CD8-positive, alpha-beta T cell (primary cell): ENCODE measurements at regions of chr3 and their contacts with region 1.

Region 1: GRCh38 chr3:121834696-121835464 is at the starts of genes EAF2 and IQCB1:
- DNase-seq: peak; percentile 91 to 98 (median 95)
- ATAC-seq: peak; percentile 97
- H3K4me3 ChIP-seq: peak within 1 kb of the TSS; percentile 74 to 91
- H3K4me3 Mint-ChIP-seq: peak within 1 kb of the TSS; percentile 93
- H3K27ac ChIP-seq: peak within 1 kb of the TSS; percentile 82 to 87
- H3K27ac Mint-ChIP-seq: peak within 1 kb of the TSS; percentile 94
- H3K4me1 ChIP-seq: peaks cover 25% of the 10 kb centered on the region
- H3K4me1 Mint-ChIP-seq: peaks cover 53% of the 10 kb centered on the region
- H3K27me3 ChIP-seq: no peaks in the 10 kb centered on the region
- H3K27me3 Mint-ChIP-seq: no peaks in the 10 kb centered on the region
- CTCF ChIP-seq: no peak
- total RNA-seq, gene EAF2: 3.5 to 3.7 TPM
- total RNA-seq, gene IQCB1: 36.5 to 42.2 TPM

Region 2: GRCh38 chr3:120596116-120596852 is 1238.6 kb before region 1 on chr3 and contains the start of gene NDUFB4:
- CTCF ChIA-PET with region 1: no interaction called
- POLR2A ChIA-PET with region 1: no interaction called
- intact Hi-C with region 1: loop called in 1 of 2 experiments (anchors 10 kb)
- DNase-seq: peak; percentile 87 to 99 (median 95)
- ATAC-seq: peak; percentile 92
- H3K4me3 ChIP-seq: peak within 1 kb of the TSS; percentile 77 to 92
- H3K4me3 Mint-ChIP-seq: peak within 1 kb of the TSS; percentile 94
- H3K27ac ChIP-seq: peak within 1 kb of the TSS; percentile 91 to 95
- H3K27ac Mint-ChIP-seq: peak within 1 kb of the TSS; percentile 97
- H3K4me1 ChIP-seq: peaks cover 34% of the 10 kb centered on the region
- H3K4me1 Mint-ChIP-seq: peaks cover 12% of the 10 kb centered on the region
- H3K27me3 ChIP-seq: no peaks in the 10 kb centered on the region
- H3K27me3 Mint-ChIP-seq: no peaks in the 10 kb centered on the region
- CTCF ChIP-seq: no peak
- total RNA-seq, gene NDUFB4: 63.2 to 71.5 TPM

Region 3: GRCh38 chr3:121584418-121584817 is 250.5 kb before region 1 on chr3:
- CTCF ChIA-PET with region 1: no interaction called
- POLR2A ChIA-PET with region 1: no interaction called
- intact Hi-C with region 1: no loop called
- DNase-seq: no peak
- ATAC-seq: no peak
- H3K4me3 ChIP-seq: no peak overlapping the region
- H3K4me3 Mint-ChIP-seq: no peak overlapping the region
- H3K27ac ChIP-seq: no peak overlapping the region
- H3K27ac Mint-ChIP-seq: no peak overlapping the region
- H3K4me1 ChIP-seq: no peaks in the 10 kb centered on the region
- H3K4me1 Mint-ChIP-seq: no peaks in the 10 kb centered on the region
- H3K27me3 ChIP-seq: no peaks in the 10 kb centered on the region
- H3K27me3 Mint-ChIP-seq: peaks cover 16% of the 10 kb centered on the region
- CTCF ChIP-seq: no peak

Region 4: GRCh38 chr3:121660356-121661171 is 174.3 kb before region 1 on chr3 and contains the start of gene HCLS1:
- CTCF ChIA-PET with region 1: no interaction called
- POLR2A ChIA-PET with region 1: interaction called, 6 read pairs
- intact Hi-C with region 1: loop called (anchors 1 to 2 kb)
- DNase-seq: peak; percentile 52 to 90 (median 71)
- ATAC-seq: peak; percentile 83
- H3K4me3 ChIP-seq: peak within 1 kb of the TSS; percentile 58
- H3K4me3 Mint-ChIP-seq: peak within 1 kb of the TSS; percentile 92
- H3K27ac ChIP-seq: peak within 1 kb of the TSS; percentile 86 to 95
- H3K27ac Mint-ChIP-seq: peak within 1 kb of the TSS; percentile 99
- H3K4me1 ChIP-seq: peaks cover 43% of the 10 kb centered on the region
- H3K4me1 Mint-ChIP-seq: peaks cover 54% of the 10 kb centered on the region
- H3K27me3 ChIP-seq: no peaks in the 10 kb centered on the region
- H3K27me3 Mint-ChIP-seq: no peaks in the 10 kb centered on the region
- CTCF ChIP-seq: no peak
- total RNA-seq, gene HCLS1: 162 to 179 TPM

Region 5: GRCh38 chr3:121749276-121750086 is 85.4 kb before region 1 on chr3 and contains the start of gene GOLGB1:
- CTCF ChIA-PET with region 1: no interaction called
- POLR2A ChIA-PET with region 1: no interaction called
- intact Hi-C with region 1: loop called (anchors 1 to 2 kb)
- DNase-seq: peak; percentile 74 to 99 (median 90)
- ATAC-seq: peak; percentile 94
- H3K4me3 ChIP-seq: peak within 1 kb of the TSS; percentile 86 to 94
- H3K4me3 Mint-ChIP-seq: no peak within 1 kb of the TSS
- H3K27ac ChIP-seq: peak within 1 kb of the TSS; percentile 97 to 98
- H3K27ac Mint-ChIP-seq: no peak within 1 kb of the TSS
- H3K4me1 ChIP-seq: peaks cover 19% of the 10 kb centered on the region
- H3K4me1 Mint-ChIP-seq: peaks cover 14% of the 10 kb centered on the region
- H3K27me3 ChIP-seq: peaks cover 0 to 6% of the 10 kb centered on the region in 2 experiments
- H3K27me3 Mint-ChIP-seq: peaks cover 4% of the 10 kb centered on the region
- CTCF ChIP-seq: no peak
- total RNA-seq, gene GOLGB1: 47.4 to 53.9 TPM

Region 6: GRCh38 chr3:122230174-122230573 is 395.3 kb after region 1 on chr3:
- CTCF ChIA-PET with region 1: no interaction called
- POLR2A ChIA-PET with region 1: no interaction called
- intact Hi-C with region 1: no loop called
- DNase-seq: no peak
- ATAC-seq: no peak
- H3K4me3 ChIP-seq: no peak overlapping the region
- H3K4me3 Mint-ChIP-seq: no peak overlapping the region
- H3K27ac ChIP-seq: no peak overlapping the region
- H3K27ac Mint-ChIP-seq: no peak overlapping the region
- H3K4me1 ChIP-seq: peaks cover 8% of the 10 kb centered on the region
- H3K4me1 Mint-ChIP-seq: peaks cover 16% of the 10 kb centered on the region
- H3K27me3 ChIP-seq: no peaks in the 10 kb centered on the region
- H3K27me3 Mint-ChIP-seq: peaks cover 6% of the 10 kb centered on the region
- CTCF ChIP-seq: no peak

Region 7: DNA sequence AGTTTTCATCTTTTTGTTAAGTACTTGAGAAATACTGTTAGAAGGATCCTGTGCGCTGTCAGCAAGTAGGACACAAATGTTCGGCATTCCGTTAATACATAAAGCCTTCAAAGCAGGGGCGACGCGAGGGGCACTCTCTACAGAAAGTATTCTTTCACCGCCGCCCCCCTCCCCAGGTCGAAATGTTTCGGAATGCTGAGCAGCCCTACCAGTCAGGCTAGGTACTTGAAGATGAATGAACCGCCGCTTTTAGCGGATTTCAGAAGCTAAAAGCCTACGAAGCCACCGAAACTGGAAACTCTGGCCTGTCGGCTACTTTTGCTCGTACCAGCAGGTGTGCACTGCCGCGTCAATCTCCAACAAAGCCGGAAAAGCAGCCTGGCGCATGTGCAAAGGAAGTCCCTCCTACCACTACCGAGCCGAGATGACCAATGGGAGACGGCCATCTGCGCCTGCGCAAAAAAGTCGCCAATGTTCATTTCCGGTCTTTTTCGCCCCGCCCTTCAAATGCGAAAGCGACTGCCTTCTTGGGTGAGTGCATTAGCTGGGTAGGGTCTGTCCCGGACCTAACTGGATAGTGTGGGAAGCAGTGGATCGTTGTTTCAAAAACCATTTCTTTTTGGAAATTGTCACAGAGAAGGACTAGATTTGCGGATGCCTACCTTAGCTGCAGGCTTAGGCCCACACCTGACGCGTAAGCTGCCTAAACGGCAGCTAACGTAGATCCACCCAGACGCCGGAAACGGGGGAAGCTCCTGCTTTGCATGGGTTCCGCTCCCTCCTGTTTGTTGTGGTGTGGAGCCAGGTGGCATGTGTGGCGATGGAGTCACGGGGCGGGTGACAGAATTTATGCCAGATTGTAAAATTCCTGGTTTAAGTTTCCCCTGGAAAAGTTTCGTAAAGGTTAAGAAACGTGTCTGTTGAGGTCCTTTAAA is 581.1 kb after region 1 on chr3 and contains the start of gene WDR5B:
- CTCF ChIA-PET with region 1: no interaction called
- POLR2A ChIA-PET with region 1: no interaction called
- intact Hi-C with region 1: loop called (anchors 1 to 10 kb)
- DNase-seq: peak; percentile 97 to 99 (median 98)
- ATAC-seq: peak; percentile 88
- H3K4me3 ChIP-seq: peak within 1 kb of the TSS; percentile 71 to 76
- H3K4me3 Mint-ChIP-seq: peak within 1 kb of the TSS; percentile 97
- H3K27ac ChIP-seq: peak within 1 kb of the TSS; percentile 91 to 94
- H3K27ac Mint-ChIP-seq: peak within 1 kb of the TSS; percentile 100
- H3K4me1 ChIP-seq: peaks cover 26% of the 10 kb centered on the region
- H3K4me1 Mint-ChIP-seq: peaks cover 58% of the 10 kb centered on the region
- H3K27me3 ChIP-seq: no peaks in the 10 kb centered on the region
- H3K27me3 Mint-ChIP-seq: no peaks in the 10 kb centered on the region
- CTCF ChIP-seq: no peak
- total RNA-seq, gene WDR5B: 1.9 to 2.7 TPM

Region 8: DNA sequence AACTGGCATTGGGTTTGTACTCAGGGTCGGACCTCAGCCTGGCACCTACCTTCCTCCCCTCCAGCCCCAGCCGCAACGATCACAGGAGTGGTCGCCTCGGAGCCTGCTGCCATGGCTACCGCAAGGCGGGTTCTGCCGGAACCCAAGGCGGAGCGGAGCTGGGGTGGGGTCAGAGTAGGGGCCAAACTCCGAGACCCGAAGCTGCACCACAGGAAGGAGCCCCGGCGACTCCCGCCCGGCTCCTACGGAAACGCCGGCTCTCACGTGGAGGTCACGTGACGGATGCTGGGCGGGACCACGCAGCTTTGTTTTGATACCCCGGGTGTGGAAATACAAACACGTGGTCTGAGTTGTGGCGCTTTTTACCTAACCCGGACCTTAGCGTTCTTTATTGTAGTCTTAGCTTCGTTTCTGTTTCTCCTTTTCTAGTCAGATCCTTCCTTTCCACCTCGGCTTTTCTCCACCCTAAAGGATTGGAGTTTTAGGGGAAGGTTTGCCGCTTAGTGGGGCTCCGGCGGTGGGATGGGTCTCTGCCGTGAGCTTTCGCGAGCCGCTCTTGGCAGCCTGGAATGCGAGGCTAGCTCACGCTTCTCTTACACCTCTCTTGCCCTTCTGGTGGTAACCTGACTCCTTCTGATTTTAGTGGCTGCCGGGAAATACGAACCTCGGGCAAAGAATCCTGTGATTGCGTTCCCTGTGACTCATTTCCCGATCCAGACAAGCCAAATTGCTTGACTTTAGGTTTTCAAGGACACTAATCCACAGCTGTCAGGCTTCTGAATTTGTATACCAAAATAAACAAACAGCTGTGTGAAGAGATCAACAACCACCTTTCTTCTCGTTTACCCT is 958.9 kb after region 1 on chr3 and contains the start of gene HSPBAP1:
- CTCF ChIA-PET with region 1: no interaction called
- POLR2A ChIA-PET with region 1: no interaction called
- intact Hi-C with region 1: loop called (anchors 5 to 10 kb)
- DNase-seq: peak; percentile 72 to 95 (median 90)
- ATAC-seq: peak; percentile 67
- H3K4me3 ChIP-seq: peak within 1 kb of the TSS; percentile 78 to 81
- H3K4me3 Mint-ChIP-seq: peak within 1 kb of the TSS; percentile 91
- H3K27ac ChIP-seq: peak within 1 kb of the TSS; percentile 77 to 91
- H3K27ac Mint-ChIP-seq: no peak within 1 kb of the TSS
- H3K4me1 ChIP-seq: peaks cover 28% of the 10 kb centered on the region
- H3K4me1 Mint-ChIP-seq: peaks cover 38% of the 10 kb centered on the region
- H3K27me3 ChIP-seq: no peaks in the 10 kb centered on the region
- H3K27me3 Mint-ChIP-seq: no peaks in the 10 kb centered on the region
- CTCF ChIP-seq: no peak
- total RNA-seq, gene HSPBAP1: 8.7 to 9.3 TPM